CD4-positive, alpha-beta T cell (primary cell): ENCODE measurements at regions of chr15 and their contacts with region 1.

Region 1: DNA sequence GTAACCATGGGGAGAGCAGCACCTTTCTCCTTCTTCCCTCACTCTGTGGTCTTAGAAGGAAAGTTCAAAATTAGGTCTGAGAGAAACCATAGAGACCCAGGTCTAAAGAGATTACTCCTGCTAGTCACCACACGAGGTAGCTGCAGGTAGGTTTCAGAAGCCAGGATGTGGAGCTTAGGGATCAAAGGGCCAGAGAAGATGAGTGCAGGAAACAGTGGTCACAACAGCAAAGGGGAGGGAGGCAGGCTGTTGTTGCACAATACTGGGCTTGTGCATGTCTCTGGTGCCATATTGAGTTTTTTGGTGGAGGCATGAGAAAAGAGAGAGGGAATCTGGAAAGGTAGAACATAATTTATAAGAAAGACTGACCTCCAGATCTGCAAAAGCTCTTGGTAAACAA is 583.7 kb downstream of the AGBL1 start:
- DNase-seq: peak in 3 of 14 experiments; percentile 7 to 24 (median 13)
- ATAC-seq: no peak
- H3K4me3 ChIP-seq: no peak overlapping the region
- H3K4me3 Mint-ChIP-seq: no peak overlapping the region
- H3K27ac ChIP-seq: no peak overlapping the region
- H3K27ac Mint-ChIP-seq: no peak overlapping the region
- H3K4me1 ChIP-seq: no peaks in the 10 kb centered on the region
- H3K4me1 Mint-ChIP-seq: peaks cover 22% of the 10 kb centered on the region
- H3K27me3 ChIP-seq: no peaks in the 10 kb centered on the region
- H3K27me3 Mint-ChIP-seq: no peaks in the 10 kb centered on the region
- CTCF ChIP-seq: no peak

Region 2: GRCh38 chr15:86677278-86677677 is 13.9 kb after region 1 on chr15:
- CTCF ChIA-PET with region 1: no interaction called
- POLR2A ChIA-PET with region 1: no interaction called
- intact Hi-C with region 1: loop called in 1 of 2 experiments (anchors 2 kb)
- DNase-seq: no peak
- ATAC-seq: no peak
- H3K4me3 ChIP-seq: no peak overlapping the region
- H3K4me3 Mint-ChIP-seq: peak overlapping the region; percentile 1
- H3K27ac ChIP-seq: no peak overlapping the region
- H3K27ac Mint-ChIP-seq: no peak overlapping the region
- H3K4me1 ChIP-seq: no peaks in the 10 kb centered on the region
- H3K4me1 Mint-ChIP-seq: no peaks in the 10 kb centered on the region
- H3K27me3 ChIP-seq: no peaks in the 10 kb centered on the region
- H3K27me3 Mint-ChIP-seq: no peaks in the 10 kb centered on the region
- CTCF ChIP-seq: no peak